ENCODE measurements at regions of chr16 and their contacts with region 1.

Region 1: DNA sequence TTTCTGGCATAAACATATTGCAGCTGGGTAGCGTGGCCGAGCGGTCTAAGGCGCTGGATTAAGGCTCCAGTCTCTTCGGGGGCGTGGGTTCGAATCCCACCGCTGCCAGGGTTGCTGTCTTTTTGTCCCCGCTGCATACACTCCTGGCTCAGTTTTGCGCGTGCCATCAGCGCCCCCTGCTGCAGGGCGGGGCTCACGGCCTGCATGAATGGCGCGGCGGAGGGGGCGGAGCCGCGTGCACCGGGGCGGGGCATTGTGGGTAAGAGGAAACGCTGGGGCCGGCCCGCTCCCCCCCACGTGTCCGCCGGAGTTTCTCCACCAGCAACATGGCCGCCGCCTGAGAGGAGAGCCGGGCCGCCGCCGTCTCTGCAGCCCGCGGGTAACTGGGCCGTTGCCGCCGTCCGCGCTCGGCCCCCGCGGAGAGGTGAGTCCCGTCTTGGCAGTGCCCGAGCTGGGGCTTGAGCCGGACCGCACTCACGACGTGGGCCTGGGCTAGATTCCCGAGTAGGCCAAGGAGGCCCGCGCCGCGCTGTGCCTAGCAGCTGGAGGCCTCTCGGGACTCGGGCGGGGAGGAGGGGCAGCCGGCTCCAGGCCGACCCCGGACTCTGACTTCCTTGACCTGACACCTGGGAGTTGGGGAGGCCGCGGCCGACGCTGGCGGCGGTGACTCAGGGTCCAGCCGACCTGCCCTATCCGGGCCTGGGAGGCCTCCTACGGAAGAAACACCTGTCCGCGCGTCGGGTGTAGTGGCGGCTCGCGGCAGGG is at the start of gene POLR3E:
- DNase-seq: peak; percentile 96 to 100
- H3K4me3 ChIP-seq: peak within 1 kb of the TSS; percentile 63 to 96 (median 93)
- H3K27ac ChIP-seq: peak within 1 kb of the TSS; percentile 93
- H3K4me1 ChIP-seq: peaks cover 0 to 2% (median under 1%) of the 10 kb centered on the region in 4 experiments; a peak in 2 of 7 replicates
- H3K27me3 ChIP-seq: no peaks in the 10 kb centered on the region
- CTCF ChIP-seq: peak; percentile 81 to 93 (median 89)
- EP300 ChIP-seq: peak in 1 of 2 experiments; percentile 30; a peak in 1 of 3 replicates
- POLR2A ChIP-seq: peak; percentile 64 to 86
- RAD21 ChIP-seq: peak; percentile 85 to 87
- total RNA-seq, gene POLR3E: 91.3 and 96.5 TPM in 2 replicates

Region 2: DNA sequence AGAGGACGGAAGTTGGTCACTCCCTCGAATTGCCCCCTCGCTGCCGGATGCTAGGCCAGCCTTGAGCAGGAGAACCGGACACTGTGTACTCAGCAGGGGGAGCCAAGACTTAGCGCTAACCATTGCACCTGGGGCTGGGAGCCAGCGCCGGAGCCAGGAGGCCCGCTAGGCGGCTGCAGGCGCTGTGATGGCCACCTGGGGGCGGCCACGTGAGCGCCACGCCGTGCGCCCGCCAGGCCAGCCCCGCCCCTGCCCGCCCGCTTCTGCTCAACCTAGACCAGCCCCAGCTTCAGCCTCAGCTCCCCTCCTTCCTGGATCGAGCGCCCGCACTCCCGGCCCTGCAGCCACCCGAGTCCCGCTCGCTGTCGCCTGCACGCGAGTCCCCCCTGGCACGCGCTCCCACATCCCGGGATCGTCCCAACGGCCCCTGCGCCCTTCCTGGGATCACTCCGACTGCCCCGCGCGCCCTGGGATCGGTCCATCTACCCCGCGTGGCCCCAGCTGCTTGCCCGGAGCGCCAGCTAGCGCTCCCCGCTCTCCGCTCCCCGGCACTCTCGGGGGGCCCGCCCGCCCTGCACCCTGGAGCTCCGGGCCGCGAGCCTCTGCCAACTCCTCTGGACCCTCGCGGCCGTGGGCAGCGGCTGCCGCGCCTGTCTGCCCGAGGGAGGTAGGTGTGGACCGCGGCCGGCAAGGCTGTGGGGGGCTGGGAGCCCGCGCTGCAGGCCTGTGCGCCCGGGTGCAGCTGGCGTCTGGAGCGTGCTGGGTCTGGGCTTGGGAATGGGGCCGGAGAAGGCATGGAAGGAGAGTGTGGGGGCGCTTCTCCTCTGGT is 91.1 kb before region 1 on chr16 and contains the start of gene EEF2K:
- CTCF ChIA-PET with region 1: interaction called, 15 read pairs
- POLR2A ChIA-PET with region 1: interaction called, 18 read pairs
- DNase-seq: peak; percentile 83 to 89
- H3K4me3 ChIP-seq: peak within 1 kb of the TSS; percentile 65 to 85 (median 76)
- H3K27ac ChIP-seq: no peak within 1 kb of the TSS
- H3K4me1 ChIP-seq: peaks cover 0 to 7% (median 4%) of the 10 kb centered on the region in 4 experiments; a peak in 4 of 7 replicates
- H3K27me3 ChIP-seq: no peaks in the 10 kb centered on the region
- CTCF ChIP-seq: peak; percentile 69 to 86 (median 76)
- EP300 ChIP-seq: peak in 1 of 2 experiments; percentile 39; a peak in 1 of 3 replicates
- POLR2A ChIP-seq: peak in 1 of 2 experiments; percentile 53; a peak in 1 of 3 replicates
- RAD21 ChIP-seq: peak; percentile 33 to 63
- total RNA-seq, gene EEF2K: 30.2 and 30.5 TPM in 2 replicates

Region 3: GRCh38 chr16:22257440-22257839 is 39.9 kb before region 1 on chr16:
- CTCF ChIA-PET with region 1: interaction called, 17 read pairs
- POLR2A ChIA-PET with region 1: interaction called, 4 read pairs
- DNase-seq: no peak
- H3K4me3 ChIP-seq: no peak overlapping the region
- H3K27ac ChIP-seq: no peak overlapping the region
- H3K4me1 ChIP-seq: no peaks in the 10 kb centered on the region
- H3K27me3 ChIP-seq: no peaks in the 10 kb centered on the region
- CTCF ChIP-seq: peak in 1 of 3 experiments; percentile 21; a peak in 1 of 4 replicates
- EP300 ChIP-seq: no peak
- POLR2A ChIP-seq: no peak
- RAD21 ChIP-seq: peak; percentile 11 to 30; a peak in 2 of 4 replicates

Region 4: GRCh38 chr16:22284637-22285036 is 12.7 kb before region 1 on chr16:
- CTCF ChIA-PET with region 1: interaction called, 13 read pairs
- POLR2A ChIA-PET with region 1: interaction called, 5 read pairs
- DNase-seq: no peak
- H3K4me3 ChIP-seq: no peak overlapping the region
- H3K27ac ChIP-seq: no peak overlapping the region
- H3K4me1 ChIP-seq: no peaks in the 10 kb centered on the region; a peak in 3 of 7 replicates
- H3K27me3 ChIP-seq: no peaks in the 10 kb centered on the region
- CTCF ChIP-seq: no peak
- EP300 ChIP-seq: no peak
- POLR2A ChIP-seq: no peak
- RAD21 ChIP-seq: no peak

Region 5: GRCh38 chr16:22314661-22315378 is 17.5 kb after region 1 on chr16:
- CTCF ChIA-PET with region 1: interaction called, 42 read pairs
- POLR2A ChIA-PET with region 1: interaction called, 8 read pairs
- DNase-seq: no peak
- H3K4me3 ChIP-seq: no peak overlapping the region
- H3K27ac ChIP-seq: no peak overlapping the region
- H3K4me1 ChIP-seq: no peaks in the 10 kb centered on the region
- H3K27me3 ChIP-seq: no peaks in the 10 kb centered on the region
- CTCF ChIP-seq: no peak
- EP300 ChIP-seq: no peak
- POLR2A ChIP-seq: no peak
- RAD21 ChIP-seq: no peak

Region 6: DNA sequence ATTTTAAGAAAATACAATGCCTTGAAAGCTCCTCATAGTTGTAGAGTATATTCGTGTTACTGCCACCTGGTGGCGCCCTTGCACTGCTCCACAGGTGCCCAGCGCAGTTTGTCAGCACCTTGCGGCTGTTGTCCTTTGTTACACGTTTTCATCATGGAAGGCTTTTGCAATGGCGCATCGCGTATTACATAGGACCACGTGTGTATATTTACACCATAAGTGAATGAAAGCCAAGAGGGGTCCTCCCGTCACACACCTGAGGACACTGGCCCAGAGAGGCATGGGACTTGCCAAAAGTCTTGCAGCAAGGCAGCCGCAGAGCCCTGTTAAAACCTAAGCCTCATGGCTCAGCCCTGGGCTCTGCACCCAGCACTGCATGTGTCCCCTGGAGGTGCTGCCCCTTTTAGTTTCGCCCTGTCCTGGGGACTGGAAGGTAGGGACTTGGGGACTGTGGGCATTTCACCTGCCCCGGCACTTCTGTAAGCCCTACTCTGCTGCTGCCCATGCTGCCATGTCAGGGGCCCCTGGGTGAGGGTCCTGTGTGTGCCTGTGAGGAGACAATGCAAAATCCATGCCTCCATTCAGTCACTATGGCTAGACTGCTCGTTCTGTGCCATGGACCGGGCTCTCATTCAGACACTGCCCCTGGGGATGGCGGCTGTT is 24.2 kb after region 1 on chr16:
- CTCF ChIA-PET with region 1: interaction called, 19 read pairs
- POLR2A ChIA-PET with region 1: interaction called, 3 read pairs
- DNase-seq: peak in 1 of 2 experiments; percentile 80
- H3K4me3 ChIP-seq: no peak overlapping the region
- H3K27ac ChIP-seq: peak overlapping the region; percentile 62
- H3K4me1 ChIP-seq: peaks cover 0 to 3% (median under 1%) of the 10 kb centered on the region in 4 experiments; a peak in 2 of 7 replicates
- H3K27me3 ChIP-seq: no peaks in the 10 kb centered on the region
- CTCF ChIP-seq: peak; percentile 86 to 97 (median 91)
- EP300 ChIP-seq: no peak
- POLR2A ChIP-seq: no peak
- RAD21 ChIP-seq: peak; percentile 90 to 95

Region 7: DNA sequence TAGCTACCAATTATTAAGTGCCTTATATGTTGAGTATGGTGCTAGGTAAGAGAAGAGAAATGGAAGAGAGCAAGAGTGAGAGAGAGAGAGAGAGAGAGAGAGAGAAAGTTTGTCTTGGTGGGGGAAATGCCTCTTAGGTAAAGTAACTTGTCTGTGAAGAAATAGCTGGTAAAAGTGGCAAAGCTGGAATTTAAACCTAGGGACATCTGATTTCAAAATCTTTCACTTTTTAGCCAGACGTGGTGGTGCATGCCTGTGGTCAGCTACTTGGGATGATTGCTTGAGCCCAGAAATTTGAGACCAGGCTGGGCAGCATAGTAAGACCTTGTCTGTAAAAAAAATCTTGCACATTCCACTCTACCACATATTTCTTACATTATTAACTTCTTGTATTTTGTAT is 100.2 kb after region 1 on chr16:
- CTCF ChIA-PET with region 1: no interaction called
- POLR2A ChIA-PET with region 1: no interaction called
- DNase-seq: no peak
- H3K4me3 ChIP-seq: no peak overlapping the region
- H3K27ac ChIP-seq: no peak overlapping the region
- H3K4me1 ChIP-seq: no peaks in the 10 kb centered on the region
- H3K27me3 ChIP-seq: no peaks in the 10 kb centered on the region
- CTCF ChIP-seq: no peak
- EP300 ChIP-seq: no peak
- POLR2A ChIP-seq: no peak
- RAD21 ChIP-seq: no peak

Measured in H1 (cell line).